SK-N-SH (cell line): ENCODE measurements at regions of chr11 and their contacts with region 1.

Region 1: GRCh38 chr11:57345555-57346211 is 7.5 kb downstream of the P2RX3 start:
- DNase-seq: peak; percentile 86
- H3K4me3 ChIP-seq: no peak overlapping the region; a peak in 1 of 4 replicates
- H3K27ac ChIP-seq: no peak overlapping the region; a peak in 1 of 4 replicates
- H3K4me1 ChIP-seq: peaks cover 0 to 2% of the 10 kb centered on the region in 2 experiments; a peak in 1 of 4 replicates
- H3K27me3 ChIP-seq: no peaks in the 10 kb centered on the region
- CTCF ChIP-seq: peak; percentile 68
- EP300 ChIP-seq: no peak
- RAD21 ChIP-seq: peak; percentile 75

Region 2: DNA sequence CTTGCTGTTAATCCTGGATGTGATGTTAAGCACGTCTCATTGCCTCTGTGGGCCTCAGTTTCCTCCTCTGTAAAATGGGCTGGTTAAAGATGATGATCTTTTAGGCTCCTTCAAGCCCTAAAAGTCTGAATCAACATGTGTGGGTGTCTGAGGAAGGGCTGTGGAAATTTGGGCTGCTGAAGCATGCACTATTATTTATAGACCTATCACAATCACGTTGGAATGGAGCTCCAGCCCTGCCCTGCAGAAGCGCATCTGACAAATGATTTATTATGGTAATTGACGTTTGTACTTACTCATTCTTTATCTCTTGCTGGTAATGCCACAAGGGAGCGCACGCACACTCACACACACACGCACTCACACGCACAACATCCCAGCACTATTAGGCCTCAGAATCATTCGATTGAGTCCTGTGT is 12.9 kb after region 1 on chr11:
- CTCF ChIA-PET with region 1: interaction called, 33 read pairs
- POLR2A ChIA-PET with region 1: no interaction called
- DNase-seq: no peak
- H3K4me3 ChIP-seq: no peak overlapping the region
- H3K27ac ChIP-seq: no peak overlapping the region
- H3K4me1 ChIP-seq: no peaks in the 10 kb centered on the region; a peak in 1 of 4 replicates
- H3K27me3 ChIP-seq: peaks cover 5% of the 10 kb centered on the region; the same call in 1 of the 2 replicates
- CTCF ChIP-seq: no peak
- EP300 ChIP-seq: no peak
- RAD21 ChIP-seq: no peak

Region 3: GRCh38 chr11:57480409-57481137 is 134.9 kb after region 1 on chr11:
- CTCF ChIA-PET with region 1: interaction called, 24 read pairs
- POLR2A ChIA-PET with region 1: no interaction called
- DNase-seq: peak; percentile 82
- H3K4me3 ChIP-seq: peak overlapping the region in 1 of 2 experiments; percentile 26; a peak in 1 of 4 replicates
- H3K27ac ChIP-seq: no peak overlapping the region
- H3K4me1 ChIP-seq: peaks cover 4 to 17% of the 10 kb centered on the region in 2 experiments; a peak in 2 of 4 replicates
- H3K27me3 ChIP-seq: peaks cover 28% of the 10 kb centered on the region
- CTCF ChIP-seq: peak; percentile 61
- EP300 ChIP-seq: no peak
- RAD21 ChIP-seq: peak; percentile 52